Calu3 (cell line): ENCODE measurements at regions of chr18 and their contacts with region 1.

Region 1: DNA sequence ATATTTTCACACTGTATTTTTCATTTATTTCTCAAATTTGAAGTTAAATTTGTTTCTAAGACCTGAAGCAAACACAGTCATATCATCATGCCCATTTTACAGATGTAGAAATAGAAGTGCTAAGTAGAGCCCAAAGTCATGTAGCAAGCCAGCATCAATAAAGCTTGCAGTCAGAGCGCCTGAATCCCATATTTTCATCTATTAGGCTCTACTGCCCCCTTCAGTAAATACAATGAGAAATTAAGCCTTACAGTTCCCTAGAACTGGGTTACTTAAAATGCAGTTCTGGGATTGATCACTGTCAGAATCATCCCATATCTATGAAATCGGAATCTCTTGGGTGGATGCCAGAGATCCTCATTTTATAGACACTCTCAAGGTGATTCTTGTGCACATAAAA is 419.9 kb downstream of the TGIF1 start:
- DNase-seq: peak; percentile 7
- H3K4me3 Mint-ChIP-seq: no peak overlapping the region
- H3K27ac Mint-ChIP-seq: no peak overlapping the region
- H3K4me1 Mint-ChIP-seq: peaks cover 16% of the 10 kb centered on the region
- H3K27me3 Mint-ChIP-seq: no peaks in the 10 kb centered on the region
- CTCF ChIP-seq: peak; percentile 55

Region 2: DNA sequence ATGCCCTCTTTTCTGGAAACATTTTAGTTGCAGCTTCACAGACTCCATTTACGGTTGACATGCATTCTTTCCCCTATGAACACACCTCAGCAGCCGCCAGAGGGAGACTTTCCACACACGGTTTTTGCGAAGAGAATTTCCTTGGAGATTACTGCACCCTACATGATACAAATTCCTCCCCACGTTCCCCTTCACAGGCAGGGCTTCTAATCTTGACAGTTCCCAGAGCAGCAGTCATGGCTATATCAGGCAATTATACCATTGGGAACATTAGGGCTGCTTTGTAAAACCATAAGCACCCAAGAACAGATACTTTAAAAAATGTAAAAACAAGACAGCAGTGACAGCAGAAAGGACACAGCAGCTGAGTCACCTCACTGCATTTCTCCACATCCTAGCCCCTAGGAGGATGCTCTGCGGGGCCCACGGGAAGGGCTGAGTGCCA is 166.1 kb before region 1 on chr18:
- CTCF ChIA-PET with region 1: interaction called, 22 read pairs
- intact Hi-C with region 1: loop called (anchors 2 kb)
- DNase-seq: peak; percentile 74
- H3K4me3 Mint-ChIP-seq: no peak overlapping the region
- H3K27ac Mint-ChIP-seq: no peak overlapping the region
- H3K4me1 Mint-ChIP-seq: peaks cover 35% of the 10 kb centered on the region
- H3K27me3 Mint-ChIP-seq: no peaks in the 10 kb centered on the region
- CTCF ChIP-seq: peak; percentile 72

Region 3: DNA sequence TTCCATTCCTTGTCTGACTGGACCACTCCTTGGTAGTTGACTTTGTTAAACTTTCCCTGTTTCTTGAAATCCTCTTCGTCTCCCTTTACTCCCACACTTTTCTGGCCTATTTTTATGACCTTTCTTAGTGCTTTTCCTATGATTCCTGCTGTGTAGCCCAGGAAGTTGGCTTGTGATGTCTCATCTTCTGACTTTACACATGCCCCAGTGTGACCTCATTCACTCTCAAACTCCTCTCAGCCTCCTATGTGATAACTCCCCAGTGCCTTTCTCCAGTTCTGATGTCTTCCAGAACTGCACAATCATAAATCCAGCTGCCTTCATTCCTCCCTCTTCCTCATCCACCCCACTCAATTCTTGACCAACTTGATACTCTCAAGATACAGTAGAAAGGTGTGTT is 12.3 kb before region 1 on chr18:
- CTCF ChIA-PET with region 1: interaction called, 12 read pairs
- intact Hi-C with region 1: no loop called
- DNase-seq: no peak
- H3K4me3 Mint-ChIP-seq: no peak overlapping the region
- H3K27ac Mint-ChIP-seq: no peak overlapping the region
- H3K4me1 Mint-ChIP-seq: no peaks in the 10 kb centered on the region
- H3K27me3 Mint-ChIP-seq: no peaks in the 10 kb centered on the region
- CTCF ChIP-seq: no peak

Region 4: GRCh38 chr18:3995476-3996102 is 125.7 kb after region 1 on chr18:
- CTCF ChIA-PET with region 1: no interaction called
- intact Hi-C with region 1: loop called (anchors 2 kb)
- DNase-seq: peak; percentile 64
- H3K4me3 Mint-ChIP-seq: no peak overlapping the region
- H3K27ac Mint-ChIP-seq: no peak overlapping the region
- H3K4me1 Mint-ChIP-seq: no peaks in the 10 kb centered on the region
- H3K27me3 Mint-ChIP-seq: no peaks in the 10 kb centered on the region
- CTCF ChIP-seq: peak; percentile 86